ENCODE measurements at regions of chr22 and their contacts with region 1.

Region 1: DNA sequence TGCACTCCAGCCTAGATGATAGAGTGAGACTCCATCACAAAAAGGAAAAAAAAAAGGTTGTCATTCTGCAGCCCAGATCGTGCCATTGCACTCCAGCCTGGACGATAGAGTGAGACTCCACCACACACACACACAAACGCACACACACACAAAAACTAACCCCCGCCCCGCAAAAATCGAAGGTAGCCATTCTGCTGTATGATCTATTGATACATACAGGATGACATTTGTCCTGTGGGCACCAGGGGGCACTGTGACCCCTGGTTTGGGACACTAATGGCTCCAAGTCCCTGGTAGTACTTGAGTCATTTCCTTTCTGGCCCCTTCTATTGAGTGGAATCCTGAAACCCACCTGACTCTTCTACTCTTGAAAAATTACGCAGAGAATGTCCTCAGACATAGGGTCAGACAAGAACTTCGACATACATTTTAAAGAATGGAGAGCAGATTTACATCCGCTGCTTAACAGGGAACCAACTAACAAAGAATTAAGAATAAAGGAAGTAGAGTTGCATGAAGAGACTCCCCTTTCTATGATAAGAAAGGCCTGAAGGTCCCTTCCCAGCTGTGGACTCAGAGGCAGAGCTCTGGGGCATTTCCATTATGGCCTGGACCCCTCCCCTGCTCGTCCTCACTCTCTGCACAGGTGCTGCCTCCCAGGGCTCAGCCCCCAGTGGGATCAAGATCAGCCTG is 35.0 kb upstream of the PRAME start:
- DNase-seq: no peak
- ATAC-seq: peak; percentile 91
- H3K4me3 ChIP-seq: no peak overlapping the region
- H3K27ac ChIP-seq: no peak overlapping the region
- H3K4me1 ChIP-seq: no peaks in the 10 kb centered on the region
- H3K27me3 ChIP-seq: no peaks in the 10 kb centered on the region
- CTCF ChIP-seq: peak; percentile 59 to 75 (median 65)
- EP300 ChIP-seq: no peak
- POLR2A ChIP-seq: no peak
- RAD21 ChIP-seq: peak; percentile 76

Region 2: GRCh38 chr22:22397277-22397870 is 196.7 kb before region 1 on chr22:
- CTCF ChIA-PET with region 1: no interaction called
- POLR2A ChIA-PET with region 1: no interaction called
- RAD21 ChIA-PET with region 1: no interaction called
- SMC1A ChIA-PET with region 1: no interaction called
- in situ Hi-C with region 1: no loop called
- intact Hi-C with region 1: no loop called
- DNase-seq: no peak
- ATAC-seq: no peak
- H3K4me3 ChIP-seq: no peak overlapping the region
- H3K27ac ChIP-seq: no peak overlapping the region
- H3K4me1 ChIP-seq: no peaks in the 10 kb centered on the region; the same call in 1 of the 2 replicates
- H3K27me3 ChIP-seq: no peaks in the 10 kb centered on the region
- CTCF ChIP-seq: no peak
- EP300 ChIP-seq: no peak
- POLR2A ChIP-seq: no peak
- RAD21 ChIP-seq: no peak

Region 3: DNA sequence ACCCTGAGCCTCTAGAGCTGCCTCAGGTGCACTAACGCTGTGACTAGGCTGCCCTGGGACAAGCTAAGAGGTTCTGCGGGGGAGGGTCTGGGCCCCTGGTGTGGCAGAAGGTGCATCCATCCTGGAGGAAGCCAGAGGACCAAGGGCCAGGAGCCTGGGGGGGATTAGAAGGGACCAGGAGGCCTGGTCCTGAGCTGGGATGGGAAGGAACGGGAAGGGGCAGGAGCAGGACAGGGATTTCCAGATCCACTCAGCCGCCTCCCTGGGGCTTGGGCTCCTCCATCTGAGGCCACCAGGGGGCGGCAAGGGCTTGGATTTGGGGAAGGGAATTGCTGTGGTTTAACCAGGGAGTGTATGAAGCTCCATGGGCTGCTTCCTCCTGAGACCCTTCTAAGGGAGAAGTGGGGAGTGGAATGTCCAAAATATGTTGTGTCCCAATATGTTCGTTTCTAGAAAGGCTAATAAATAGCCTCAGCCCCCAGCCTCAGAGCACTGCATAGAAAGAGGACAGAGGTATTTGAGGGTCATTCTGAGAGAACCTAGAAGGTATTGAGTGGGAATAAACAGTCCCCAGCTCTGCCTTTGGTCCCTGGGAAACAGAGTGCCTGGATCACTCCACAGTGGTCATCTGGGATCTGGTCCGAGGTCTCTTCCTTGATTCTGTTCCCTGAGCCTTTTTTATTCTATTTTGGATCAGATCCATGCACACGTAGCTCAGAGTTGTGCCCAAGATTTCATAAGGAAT is 17.7 kb before region 1 on chr22:
- CTCF ChIA-PET with region 1: interaction called, 30 read pairs
- POLR2A ChIA-PET with region 1: no interaction called
- RAD21 ChIA-PET with region 1: no interaction called
- SMC1A ChIA-PET with region 1: no interaction called
- in situ Hi-C with region 1: no loop called
- intact Hi-C with region 1: no loop called
- DNase-seq: no peak
- ATAC-seq: peak; percentile 68
- H3K4me3 ChIP-seq: no peak overlapping the region
- H3K27ac ChIP-seq: no peak overlapping the region
- H3K4me1 ChIP-seq: no peaks in the 10 kb centered on the region
- H3K27me3 ChIP-seq: no peaks in the 10 kb centered on the region
- CTCF ChIP-seq: peak; percentile 55 to 78 (median 66)
- EP300 ChIP-seq: no peak
- POLR2A ChIP-seq: no peak
- RAD21 ChIP-seq: peak; percentile 40